ENCODE measurements at regions of chr10 and their contacts with region 1.

Region 1: GRCh38 chr10:79487296-79488194 is 24.8 kb upstream of the EIF5AL1 start:
- DNase-seq: peak; percentile 81 to 84 (median 83)
- ATAC-seq: peak; percentile 94
- H3K4me3 ChIP-seq: no peak overlapping the region
- H3K27ac ChIP-seq: no peak overlapping the region
- H3K4me1 ChIP-seq: peaks cover 7 to 14% of the 10 kb centered on the region in 2 experiments
- H3K27me3 ChIP-seq: peaks cover 3 to 6% of the 10 kb centered on the region in 2 experiments; a peak in 1 of 5 replicates
- CTCF ChIP-seq: peak; percentile 92 to 97 (median 94)
- EP300 ChIP-seq: no peak
- POLR2A ChIP-seq: no peak
- RAD21 ChIP-seq: peak; percentile 81 to 95

Region 2: DNA sequence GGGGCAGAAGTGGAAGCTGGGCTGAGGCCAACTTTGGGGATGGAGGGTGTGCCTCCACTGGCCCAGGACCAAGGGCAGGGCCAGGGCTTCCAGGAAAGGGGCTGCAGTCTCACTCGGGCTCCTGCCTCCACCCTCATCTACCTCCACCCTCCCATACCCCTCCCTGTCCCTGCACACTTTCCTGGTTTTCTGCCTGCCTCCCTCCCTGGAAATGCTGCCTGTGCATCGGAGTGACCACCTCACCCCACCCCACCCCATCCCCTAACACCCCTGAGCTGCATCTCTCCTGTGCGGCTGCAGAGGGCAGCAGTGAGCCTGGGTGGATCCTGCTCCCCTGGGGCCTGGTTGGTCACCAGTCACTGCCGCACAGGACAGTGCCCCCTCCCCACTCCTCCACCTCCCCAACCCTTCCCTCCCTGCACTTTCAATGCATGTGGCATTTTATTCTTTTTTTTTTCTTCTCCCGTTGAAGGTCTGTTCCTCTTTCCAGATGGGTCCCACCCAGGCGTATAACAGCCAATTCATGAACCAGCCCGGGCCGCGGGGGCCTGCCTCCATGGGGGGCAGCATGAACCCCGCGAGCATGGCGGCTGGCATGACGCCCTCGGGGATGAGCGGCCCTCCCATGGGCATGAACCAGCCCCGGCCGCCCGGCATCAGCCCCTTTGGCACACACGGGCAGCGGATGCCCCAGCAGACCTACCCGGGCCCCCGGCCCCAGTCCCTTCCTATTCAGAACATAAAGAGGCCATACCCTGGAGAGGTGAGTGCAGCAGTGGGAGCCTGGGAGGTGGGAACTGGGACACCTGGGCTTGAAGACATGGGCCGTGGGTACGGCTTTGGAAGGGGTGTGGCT is 194.4 kb before region 1 on chr10:
- CTCF ChIA-PET with region 1: interaction called, 4 read pairs
- POLR2A ChIA-PET with region 1: no interaction called
- in situ Hi-C with region 1: no loop called
- intact Hi-C with region 1: loop called (anchors 5 kb)
- DNase-seq: peak; percentile 62 to 93 (median 90)
- ATAC-seq: peak; percentile 95
- H3K4me3 ChIP-seq: no peak overlapping the region
- H3K27ac ChIP-seq: no peak overlapping the region
- H3K4me1 ChIP-seq: peaks cover 0 to 16% of the 10 kb centered on the region in 2 experiments; a peak in 1 of 5 replicates
- H3K27me3 ChIP-seq: no peaks in the 10 kb centered on the region
- CTCF ChIP-seq: peak; percentile 69 to 80 (median 73)
- EP300 ChIP-seq: no peak
- POLR2A ChIP-seq: no peak
- RAD21 ChIP-seq: peak; percentile 33 to 38

Region 3: DNA sequence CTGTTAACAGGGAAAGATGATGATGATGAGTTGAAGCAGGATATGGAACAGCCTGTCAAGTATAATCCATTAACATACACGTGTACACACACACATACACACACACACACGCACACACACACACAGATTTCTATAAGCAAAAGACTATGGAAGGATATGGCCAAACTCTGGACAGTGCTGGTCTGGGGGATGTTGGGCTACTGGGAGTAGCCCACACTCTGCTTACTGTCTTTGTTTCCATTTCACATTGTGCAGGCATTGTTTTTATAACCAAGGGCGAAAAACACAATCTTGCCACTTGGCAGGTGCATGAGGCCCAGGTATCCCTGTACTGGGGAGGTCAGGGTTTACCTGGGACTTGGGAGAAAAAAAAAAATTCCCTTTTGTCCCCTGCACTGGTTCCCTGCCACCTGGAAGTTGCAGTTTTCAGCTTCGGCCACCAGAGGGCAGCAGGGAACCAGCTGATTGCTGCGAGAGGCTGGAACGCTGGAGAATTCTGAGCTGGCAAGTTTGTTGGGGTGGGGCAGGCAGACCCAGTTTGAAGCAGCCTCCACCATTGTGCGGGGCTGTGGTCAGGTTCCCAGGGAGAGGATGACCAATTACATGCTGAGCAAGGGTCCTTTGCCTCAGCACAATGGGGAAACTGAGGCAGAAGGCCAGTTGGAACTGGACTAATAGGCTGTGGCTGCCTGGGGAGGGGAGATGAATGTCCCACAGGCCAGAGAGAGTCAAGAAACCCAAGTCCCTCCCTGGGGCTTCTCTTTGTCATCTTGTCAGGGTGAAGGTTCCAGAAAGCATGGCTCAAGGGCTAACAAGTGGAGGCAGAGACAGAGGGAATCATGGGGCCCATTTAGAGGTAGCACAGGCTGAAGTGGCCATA is 113.0 kb before region 1 on chr10:
- CTCF ChIA-PET with region 1: interaction called, 57 read pairs
- POLR2A ChIA-PET with region 1: interaction called, 6 read pairs
- in situ Hi-C with region 1: no loop called
- intact Hi-C with region 1: loop called (anchors 2 kb)
- DNase-seq: peak; percentile 87 to 88 (median 88)
- ATAC-seq: peak; percentile 97
- H3K4me3 ChIP-seq: no peak overlapping the region
- H3K27ac ChIP-seq: no peak overlapping the region
- H3K4me1 ChIP-seq: peaks cover 8 to 9% of the 10 kb centered on the region in 2 experiments; a peak in 4 of 5 replicates
- H3K27me3 ChIP-seq: peaks cover 0 to 8% of the 10 kb centered on the region in 2 experiments; a peak in 2 of 5 replicates
- CTCF ChIP-seq: peak; percentile 97 to 99 (median 97)
- EP300 ChIP-seq: no peak
- POLR2A ChIP-seq: no peak
- RAD21 ChIP-seq: peak; percentile 99

Region 4: GRCh38 chr10:79390551-79391209 is 96.9 kb before region 1 on chr10:
- CTCF ChIA-PET with region 1: no interaction called
- POLR2A ChIA-PET with region 1: no interaction called
- in situ Hi-C with region 1: no loop called
- intact Hi-C with region 1: loop called (anchors 5 kb)
- DNase-seq: peak; percentile 86 to 91 (median 88)
- ATAC-seq: peak; percentile 83
- H3K4me3 ChIP-seq: peak overlapping the region; percentile 9
- H3K27ac ChIP-seq: peak overlapping the region; percentile 83
- H3K4me1 ChIP-seq: peaks cover 47 to 61% of the 10 kb centered on the region in 2 experiments
- H3K27me3 ChIP-seq: no peaks in the 10 kb centered on the region
- CTCF ChIP-seq: peak; percentile 83 to 86 (median 84)
- EP300 ChIP-seq: no peak
- POLR2A ChIP-seq: peak; percentile 70
- RAD21 ChIP-seq: peak; percentile 39 to 61